ENCODE measurements at regions of chr12 and their contacts with region 1.

Region 1: DNA sequence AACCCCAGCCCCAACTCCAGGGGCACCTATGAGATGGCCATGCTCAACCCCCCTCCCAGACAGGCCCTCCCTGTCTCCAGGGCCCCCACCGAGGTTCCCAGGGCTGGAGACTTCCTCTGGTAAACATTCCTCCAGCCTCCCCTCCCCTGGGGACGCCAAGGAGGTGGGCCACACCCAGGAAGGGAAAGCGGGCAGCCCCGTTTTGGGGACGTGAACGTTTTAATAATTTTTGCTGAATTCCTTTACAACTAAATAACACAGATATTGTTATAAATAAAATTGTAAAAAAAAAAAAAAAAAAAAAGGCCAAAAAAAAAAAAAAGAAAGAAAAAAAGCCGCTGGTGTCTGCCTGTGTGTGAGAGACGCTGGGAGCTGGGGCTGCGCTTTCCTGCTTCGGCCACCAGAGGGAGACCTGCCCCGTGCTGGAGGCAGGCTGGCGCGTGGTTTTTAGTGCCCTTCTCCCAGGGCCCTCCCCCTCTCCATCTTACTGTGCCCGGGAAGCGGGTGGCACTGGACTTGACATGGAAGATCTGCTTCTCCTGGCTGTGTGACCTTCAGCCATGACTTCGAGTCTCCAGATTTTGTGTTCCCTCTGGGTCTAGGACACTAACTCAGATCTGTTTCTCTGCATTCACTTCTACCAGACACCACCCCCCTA is 3.4 kb upstream of the NXPH4 start:
- DNase-seq: peak in 1 of 2 experiments; percentile 92
- H3K4me3 ChIP-seq: peak overlapping the region in 3 of 4 experiments; percentile 4 to 13 (median 12); a peak in 3 of 8 replicates
- H3K27ac ChIP-seq: no peak overlapping the region
- H3K4me1 ChIP-seq: peaks cover 9 to 35% (median 25%) of the 10 kb centered on the region in 4 experiments
- H3K27me3 ChIP-seq: peaks cover 33 to 44% (median 42%) of the 10 kb centered on the region in 4 experiments
- CTCF ChIP-seq: peak in 2 of 3 experiments; percentile 88 to 90; a peak in 3 of 4 replicates
- EP300 ChIP-seq: no peak
- POLR2A ChIP-seq: peak in 1 of 2 experiments; percentile 22; a peak in 1 of 3 replicates
- RAD21 ChIP-seq: peak; percentile 76

Region 2: DNA sequence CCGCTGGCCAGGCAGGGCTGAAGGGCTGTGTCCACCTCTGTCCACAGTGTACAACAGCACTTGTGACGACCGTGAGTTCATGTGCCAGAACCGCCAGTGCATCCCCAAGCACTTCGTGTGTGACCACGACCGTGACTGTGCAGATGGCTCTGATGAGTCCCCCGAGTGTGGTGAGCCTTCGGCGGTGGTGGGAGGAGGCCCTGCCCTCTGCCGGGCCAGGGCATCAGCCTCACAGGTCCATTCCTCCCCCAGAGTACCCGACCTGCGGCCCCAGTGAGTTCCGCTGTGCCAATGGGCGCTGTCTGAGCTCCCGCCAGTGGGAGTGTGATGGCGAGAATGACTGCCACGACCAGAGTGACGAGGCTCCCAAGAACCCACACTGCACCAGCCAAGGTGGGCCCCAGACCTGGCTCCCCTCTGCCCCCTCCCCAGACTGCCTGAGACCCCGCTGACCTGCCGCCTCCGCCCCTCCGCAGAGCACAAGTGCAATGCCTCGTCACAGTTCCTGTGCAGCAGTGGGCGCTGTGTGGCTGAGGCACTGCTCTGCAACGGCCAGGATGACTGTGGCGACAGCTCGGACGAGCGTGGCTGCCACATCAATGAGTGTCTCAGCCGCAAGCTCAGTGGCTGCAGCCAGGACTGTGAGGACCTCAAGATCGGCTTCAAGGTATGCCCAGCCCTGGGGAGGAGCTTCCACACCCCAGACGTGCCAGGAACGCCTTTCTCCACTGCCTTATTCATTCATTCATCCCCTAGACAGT is 17.4 kb before region 1 on chr12:
- CTCF ChIA-PET with region 1: interaction called, 32 read pairs
- POLR2A ChIA-PET with region 1: interaction called, 20 read pairs
- DNase-seq: no peak
- H3K4me3 ChIP-seq: no peak overlapping the region
- H3K27ac ChIP-seq: no peak overlapping the region
- H3K4me1 ChIP-seq: no peaks in the 10 kb centered on the region; a peak in 1 of 7 replicates
- H3K27me3 ChIP-seq: no peaks in the 10 kb centered on the region
- CTCF ChIP-seq: no peak
- EP300 ChIP-seq: no peak
- POLR2A ChIP-seq: no peak
- RAD21 ChIP-seq: no peak

Region 3: GRCh38 chr12:57229634-57230380 is 16.6 kb after region 1 on chr12 and contains the start of gene SHMT2:
- CTCF ChIA-PET with region 1: interaction called, 726 read pairs
- POLR2A ChIA-PET with region 1: interaction called, 686 read pairs
- DNase-seq: peak; percentile 91 to 94
- H3K4me3 ChIP-seq: peak within 1 kb of the TSS; percentile 69 to 93 (median 81)
- H3K27ac ChIP-seq: peak within 1 kb of the TSS; percentile 85
- H3K4me1 ChIP-seq: peaks cover 4 to 43% (median 21%) of the 10 kb centered on the region in 4 experiments
- H3K27me3 ChIP-seq: peaks cover 11 to 32% (median 26%) of the 10 kb centered on the region in 4 experiments
- CTCF ChIP-seq: no peak
- EP300 ChIP-seq: 0 out of 3 replicates have a peak, but pooled peaks of 1 of the 2 experiments have one; percentile 37
- POLR2A ChIP-seq: peak in 1 of 2 experiments; percentile 68; a peak in 2 of 3 replicates
- RAD21 ChIP-seq: no peak
- total RNA-seq, gene SHMT2: 274 and 283 TPM in 2 replicates

Region 4: GRCh38 chr12:57261428-57261865 is 48.3 kb after region 1 on chr12:
- CTCF ChIA-PET with region 1: interaction called, 17 read pairs
- POLR2A ChIA-PET with region 1: no interaction called
- DNase-seq: no peak
- H3K4me3 ChIP-seq: no peak overlapping the region
- H3K27ac ChIP-seq: no peak overlapping the region
- H3K4me1 ChIP-seq: peaks cover 0 to 7% (median 3%) of the 10 kb centered on the region in 4 experiments; a peak in 5 of 7 replicates
- H3K27me3 ChIP-seq: no peaks in the 10 kb centered on the region
- CTCF ChIP-seq: no peak
- EP300 ChIP-seq: no peak
- POLR2A ChIP-seq: no peak
- RAD21 ChIP-seq: no peak

Region 5: GRCh38 chr12:57343703-57344378 is 130.7 kb after region 1 on chr12:
- CTCF ChIA-PET with region 1: no interaction called
- POLR2A ChIA-PET with region 1: no interaction called
- DNase-seq: no peak
- H3K4me3 ChIP-seq: no peak overlapping the region
- H3K27ac ChIP-seq: no peak overlapping the region
- H3K4me1 ChIP-seq: peaks cover 0 to 3% (median 1%) of the 10 kb centered on the region in 4 experiments; a peak in 2 of 7 replicates
- H3K27me3 ChIP-seq: no peaks in the 10 kb centered on the region
- CTCF ChIP-seq: no peak
- EP300 ChIP-seq: no peak
- POLR2A ChIP-seq: no peak
- RAD21 ChIP-seq: no peak